Activated CD8-positive, alpha-beta T cell treated with anti-CD3 and anti-CD28 coated beads for 36 hours (primary cell): ENCODE measurements at regions of chr20 and their contacts with region 1.

Region 1: GRCh38 chr20:5100684-5101347 is 18.9 kb downstream of the PCNA start:
- DNase-seq: peak; percentile 85
- ATAC-seq: peak; percentile 91
- H3K4me3 Mint-ChIP-seq: no peak overlapping the region
- H3K27ac Mint-ChIP-seq: peak overlapping the region; percentile 10
- H3K4me1 Mint-ChIP-seq: peaks cover 10% of the 10 kb centered on the region
- H3K27me3 Mint-ChIP-seq: no peaks in the 10 kb centered on the region
- CTCF ChIP-seq: peak; percentile 94

Region 2: DNA sequence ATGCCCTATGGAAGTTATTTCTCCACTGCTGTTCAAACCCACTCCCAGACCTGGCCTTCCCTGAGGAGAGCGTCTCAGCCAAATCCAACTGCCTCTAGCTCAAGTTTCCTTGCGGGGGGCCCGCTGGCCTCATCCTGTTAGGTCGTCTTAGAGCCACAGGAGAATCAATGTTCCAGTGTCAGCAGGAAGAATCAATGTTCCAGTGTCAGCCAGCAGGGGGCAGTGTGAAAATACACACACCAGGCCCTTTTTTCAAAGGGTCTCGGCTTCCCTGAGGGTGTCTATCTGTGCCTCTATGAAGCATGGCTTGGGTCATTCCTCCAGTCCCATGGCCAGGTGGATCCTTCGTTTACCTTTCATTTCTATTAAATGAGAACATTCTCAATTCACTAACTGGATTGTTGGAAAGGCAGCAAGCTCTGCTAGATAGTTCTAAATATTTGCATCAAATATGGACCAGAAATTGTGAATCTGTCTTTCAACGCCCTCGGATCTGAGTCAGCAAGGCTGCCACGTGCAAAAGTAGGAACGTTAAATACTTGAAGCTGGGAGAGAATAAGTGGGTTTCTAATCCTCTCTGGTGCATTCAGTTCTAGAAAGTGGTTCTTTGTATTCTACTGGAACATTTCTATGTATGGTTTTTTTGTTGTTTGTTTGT is 359.9 kb before region 1 on chr20:
- CTCF ChIA-PET with region 1: interaction called, 12 read pairs
- POLR2A ChIA-PET with region 1: no interaction called
- intact Hi-C with region 1: no loop called
- DNase-seq: peak; percentile 84
- ATAC-seq: peak; percentile 68
- H3K4me3 Mint-ChIP-seq: no peak overlapping the region
- H3K27ac Mint-ChIP-seq: no peak overlapping the region
- H3K4me1 Mint-ChIP-seq: peaks cover 8% of the 10 kb centered on the region
- H3K27me3 Mint-ChIP-seq: peaks cover 10% of the 10 kb centered on the region
- CTCF ChIP-seq: peak; percentile 82

Region 3: GRCh38 chr20:4961746-4962145 is 139.1 kb before region 1 on chr20:
- CTCF ChIA-PET with region 1: interaction called, 20 read pairs
- POLR2A ChIA-PET with region 1: interaction called, 3 read pairs
- intact Hi-C with region 1: loop called (anchors 10 kb)
- DNase-seq: peak; percentile 57
- ATAC-seq: peak; percentile 89
- H3K4me3 Mint-ChIP-seq: peak overlapping the region; percentile 5
- H3K27ac Mint-ChIP-seq: peak overlapping the region; percentile 92
- H3K4me1 Mint-ChIP-seq: peaks cover 20% of the 10 kb centered on the region
- H3K27me3 Mint-ChIP-seq: no peaks in the 10 kb centered on the region
- CTCF ChIP-seq: no peak

Region 4: GRCh38 chr20:5056801-5057599 is 43.8 kb before region 1 on chr20:
- CTCF ChIA-PET with region 1: interaction called, 104 read pairs
- POLR2A ChIA-PET with region 1: no interaction called
- intact Hi-C with region 1: loop called (anchors 5 kb)
- DNase-seq: peak; percentile 85
- ATAC-seq: peak; percentile 98
- H3K4me3 Mint-ChIP-seq: no peak overlapping the region
- H3K27ac Mint-ChIP-seq: peak overlapping the region; percentile 83
- H3K4me1 Mint-ChIP-seq: peaks cover 22% of the 10 kb centered on the region
- H3K27me3 Mint-ChIP-seq: no peaks in the 10 kb centered on the region
- CTCF ChIP-seq: peak; percentile 71

Region 5: GRCh38 chr20:5090191-5090590 is 10.6 kb before region 1 on chr20:
- CTCF ChIA-PET with region 1: interaction called, 40 read pairs
- POLR2A ChIA-PET with region 1: interaction called, 3 read pairs
- intact Hi-C with region 1: no loop called
- DNase-seq: no peak
- ATAC-seq: peak; percentile 53
- H3K4me3 Mint-ChIP-seq: no peak overlapping the region
- H3K27ac Mint-ChIP-seq: peak overlapping the region; percentile 77
- H3K4me1 Mint-ChIP-seq: peaks cover 9% of the 10 kb centered on the region
- H3K27me3 Mint-ChIP-seq: no peaks in the 10 kb centered on the region
- CTCF ChIP-seq: no peak